Right cardiac atrium (tissue), 5 donors: ENCODE measurements at regions of chr19 and their contacts with region 1.

Region 1: DNA sequence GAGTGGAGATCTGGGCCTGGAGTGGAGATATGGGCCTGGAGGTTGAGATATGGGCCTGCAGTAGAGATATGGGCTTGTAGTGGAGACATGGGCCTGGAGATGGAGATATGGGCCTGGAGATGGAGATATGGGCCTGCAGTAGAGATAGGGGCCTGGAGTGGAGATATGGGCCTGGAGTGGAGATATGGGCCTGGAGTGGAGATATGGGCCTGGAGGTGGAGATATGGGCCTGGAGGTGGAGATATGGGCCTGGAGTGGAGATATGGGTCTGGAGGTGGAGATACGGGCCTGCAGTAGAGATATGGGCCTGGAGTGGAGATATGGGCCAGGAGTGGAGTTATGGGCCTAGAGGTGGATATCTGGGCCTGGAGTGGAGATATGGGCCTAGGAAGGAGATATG is 402 bp downstream of the KIR2DL3 start:
- DNase-seq: no peak
- ATAC-seq: no peak
- H3K4me3 ChIP-seq: no peak overlapping the region
- H3K27ac ChIP-seq: no peak overlapping the region
- H3K4me1 ChIP-seq: no peaks in the 10 kb centered on the region
- H3K27me3 ChIP-seq: no peaks in the 10 kb centered on the region

Region 2: GRCh38 chr19:54851353-54851752 is 112.6 kb after region 1 on chr19:
- intact Hi-C with region 1: loop called in 2 of 4 experiments (anchors 5 kb)
- DNase-seq: no peak
- ATAC-seq: no peak
- H3K4me3 ChIP-seq: no peak overlapping the region
- H3K27ac ChIP-seq: no peak overlapping the region
- H3K4me1 ChIP-seq: no peaks in the 10 kb centered on the region
- H3K27me3 ChIP-seq: no peaks in the 10 kb centered on the region